IMR-90 (cell line): ENCODE measurements at regions of chr7 and their contacts with region 1.

Region 1: GRCh38 chr7:124618871-124619270 is 146.7 kb downstream of the GPR37 start:
- DNase-seq: no peak
- ATAC-seq: no peak
- H3K4me3 ChIP-seq: no peak overlapping the region
- H3K27ac ChIP-seq: no peak overlapping the region
- H3K4me1 ChIP-seq: no peaks in the 10 kb centered on the region
- H3K27me3 ChIP-seq: no peaks in the 10 kb centered on the region
- CTCF ChIP-seq: no peak
- POLR2A ChIP-seq: no peak
- RAD21 ChIP-seq: no peak

Region 2: GRCh38 chr7:124550036-124550435 is 68.8 kb before region 1 on chr7:
- CTCF ChIA-PET with region 1: no interaction called
- POLR2A ChIA-PET with region 1: no interaction called
- dilution Hi-C with region 1: no loop called
- in situ Hi-C with region 1: loop called (anchors 10 kb)
- intact Hi-C with region 1: no loop called
- DNase-seq: peak; percentile 21
- ATAC-seq: peak; percentile 42
- H3K4me3 ChIP-seq: no peak overlapping the region
- H3K27ac ChIP-seq: no peak overlapping the region
- H3K4me1 ChIP-seq: no peaks in the 10 kb centered on the region; the same call in 1 of the 2 replicates
- H3K27me3 ChIP-seq: no peaks in the 10 kb centered on the region
- CTCF ChIP-seq: no peak
- POLR2A ChIP-seq: no peak
- RAD21 ChIP-seq: no peak

Region 3: DNA sequence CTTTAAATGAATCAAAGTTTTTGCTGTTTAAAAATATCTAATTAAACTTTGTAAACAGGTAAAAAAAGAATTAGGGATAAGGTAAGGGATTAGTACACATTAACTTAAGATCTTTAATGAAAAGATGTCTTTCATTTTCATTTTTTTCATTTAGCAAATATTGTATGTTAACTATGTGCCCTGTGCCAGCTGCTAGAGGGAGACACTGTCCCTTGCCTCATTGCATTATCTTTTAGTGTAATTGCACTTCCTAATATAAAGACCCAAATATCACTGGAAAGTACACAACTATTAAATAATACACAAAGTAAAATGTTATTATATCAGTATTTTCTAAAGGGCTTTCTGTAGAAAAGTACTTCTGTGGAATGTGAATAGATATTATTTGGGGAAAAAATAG is 44.1 kb after region 1 on chr7:
- CTCF ChIA-PET with region 1: no interaction called
- POLR2A ChIA-PET with region 1: no interaction called
- dilution Hi-C with region 1: no loop called
- in situ Hi-C with region 1: no loop called
- intact Hi-C with region 1: loop called (anchors 1 kb)
- DNase-seq: no peak
- ATAC-seq: no peak
- H3K4me3 ChIP-seq: no peak overlapping the region
- H3K27ac ChIP-seq: no peak overlapping the region
- H3K4me1 ChIP-seq: no peaks in the 10 kb centered on the region; the same call in 1 of the 2 replicates
- H3K27me3 ChIP-seq: no peaks in the 10 kb centered on the region
- CTCF ChIP-seq: no peak
- POLR2A ChIP-seq: no peak
- RAD21 ChIP-seq: no peak